ENCODE measurements at regions of chr5 and their contacts with region 1.

Region 1: GRCh38 chr5:141557681-141558136 is 61.1 kb downstream of the DIAPH1 start:
- DNase-seq: peak; percentile 63 to 92
- H3K4me3 ChIP-seq: peak overlapping the region; percentile 0 to 38
- H3K27ac ChIP-seq: peak overlapping the region; percentile 83 to 86
- H3K4me1 ChIP-seq: peaks cover 6 to 30% of the 10 kb centered on the region in 2 donors
- H3K27me3 ChIP-seq: no peaks in the 10 kb centered on the region
- CTCF ChIP-seq: peak; percentile 70 to 74 (median 73)

Region 2: DNA sequence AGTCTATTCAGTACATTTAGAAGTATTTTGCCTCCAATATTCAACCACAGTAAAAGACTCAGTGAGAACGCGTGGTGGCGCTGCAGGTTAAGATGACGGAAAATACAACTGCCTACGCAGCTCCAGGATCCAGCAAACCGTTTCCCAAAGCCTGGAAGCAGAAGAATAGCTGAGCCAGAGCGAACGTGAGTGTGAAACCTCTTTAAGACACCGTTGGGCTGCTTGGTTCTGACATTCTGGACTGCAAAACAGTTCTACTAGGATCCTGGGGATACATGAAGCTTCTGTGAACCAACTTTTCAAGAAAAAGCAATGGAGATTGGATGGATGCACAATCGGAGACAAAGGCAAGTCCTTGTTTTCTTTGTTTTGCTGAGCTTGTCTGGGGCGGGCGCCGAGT is 375.5 kb before region 1 on chr5 and contains the start of gene PCDHB16:
- intact Hi-C with region 1: loop called (anchors 2 kb)
- DNase-seq: peak in 1 of 2 donors; percentile 68
- H3K4me3 ChIP-seq: peak within 1 kb of the TSS; percentile 44 to 58
- H3K27ac ChIP-seq: peak within 1 kb of the TSS; percentile 45 to 57
- H3K4me1 ChIP-seq: no peaks in the 10 kb centered on the region
- H3K27me3 ChIP-seq: no peaks in the 10 kb centered on the region
- CTCF ChIP-seq: peak in 2 of 3 experiments; percentile 26 to 41
- total RNA-seq, gene PCDHB16: 18.3 TPM

Region 3: GRCh38 chr5:141320225-141321169 is 237.2 kb before region 1 on chr5 and contains the start of gene TAF7:
- intact Hi-C with region 1: loop called (anchors 1 kb)
- DNase-seq: peak; percentile 47 to 91
- H3K4me3 ChIP-seq: peak within 1 kb of the TSS; percentile 76 to 92
- H3K27ac ChIP-seq: peak within 1 kb of the TSS; percentile 93 to 99
- H3K4me1 ChIP-seq: peaks cover 0 to 4% of the 10 kb centered on the region in 2 donors
- H3K27me3 ChIP-seq: no peaks in the 10 kb centered on the region
- CTCF ChIP-seq: peak; percentile 61 to 86 (median 86)
- total RNA-seq, gene TAF7: 30.1 TPM

Region 4: GRCh38 chr5:141373673-141374317 is 183.9 kb before region 1 on chr5 and contains the start of gene PCDHGA6:
- intact Hi-C with region 1: no loop called
- DNase-seq: no peak
- H3K4me3 ChIP-seq: peak within 1 kb of the TSS in 1 of 2 donors; percentile 38
- H3K27ac ChIP-seq: no peak within 1 kb of the TSS
- H3K4me1 ChIP-seq: no peaks in the 10 kb centered on the region
- H3K27me3 ChIP-seq: no peaks in the 10 kb centered on the region
- CTCF ChIP-seq: no peak
- total RNA-seq, gene PCDHGA6: 2.0 TPM

Region 5: GRCh38 chr5:141475625-141476131 is 82.0 kb before region 1 on chr5 and contains the start of gene PCDHGC3:
- intact Hi-C with region 1: loop called (anchors 1 kb)
- DNase-seq: peak; percentile 83 to 96
- H3K4me3 ChIP-seq: peak within 1 kb of the TSS; percentile 77 to 83
- H3K27ac ChIP-seq: peak within 1 kb of the TSS; percentile 90 to 92
- H3K4me1 ChIP-seq: peaks cover 15 to 34% of the 10 kb centered on the region in 2 donors
- H3K27me3 ChIP-seq: no peaks in the 10 kb centered on the region
- CTCF ChIP-seq: peak; percentile 25 to 57 (median 57)
- total RNA-seq, gene PCDHGC3: 51.4 TPM

Region 6: GRCh38 chr5:141492168-141492885 is 65.4 kb before region 1 on chr5:
- intact Hi-C with region 1: no loop called
- DNase-seq: no peak
- H3K4me3 ChIP-seq: peak overlapping the region in 1 of 2 donors; percentile 13
- H3K27ac ChIP-seq: no peak overlapping the region
- H3K4me1 ChIP-seq: peaks cover 7 to 16% of the 10 kb centered on the region in 2 donors
- H3K27me3 ChIP-seq: no peaks in the 10 kb centered on the region
- CTCF ChIP-seq: no peak

Region 7: GRCh38 chr5:141512390-141512910 is 45.3 kb before region 1 on chr5:
- intact Hi-C with region 1: no loop called
- DNase-seq: peak in 1 of 2 donors; percentile 93
- H3K4me3 ChIP-seq: peak overlapping the region; percentile 52 to 78
- H3K27ac ChIP-seq: peak overlapping the region; percentile 98 to 99
- H3K4me1 ChIP-seq: peaks cover 36 to 51% of the 10 kb centered on the region in 2 donors
- H3K27me3 ChIP-seq: no peaks in the 10 kb centered on the region
- CTCF ChIP-seq: peak; percentile 83 to 87 (median 86)

Region 8: GRCh38 chr5:141636413-141637122 is 78.9 kb after region 1 on chr5 and contains the starts of genes HDAC3 and RELL2:
- intact Hi-C with region 1: no loop called
- DNase-seq: peak; percentile 70 to 95
- H3K4me3 ChIP-seq: peak within 1 kb of the TSS; percentile 81 to 82
- H3K27ac ChIP-seq: peak within 1 kb of the TSS; percentile 52 to 67
- H3K4me1 ChIP-seq: peaks cover 10 to 22% of the 10 kb centered on the region in 2 donors
- H3K27me3 ChIP-seq: no peaks in the 10 kb centered on the region
- CTCF ChIP-seq: no peak
- total RNA-seq, gene HDAC3: 43.4 TPM
- total RNA-seq, gene RELL2: 1.4 TPM

Measured in ascending aorta (tissue), 2 donors.